ENCODE measurements at regions of chr10 and their contacts with region 1.

Region 1: GRCh38 chr10:70879207-70879606 is 9.2 kb downstream of the PCBD1 start:
- DNase-seq: no peak

Region 2: DNA sequence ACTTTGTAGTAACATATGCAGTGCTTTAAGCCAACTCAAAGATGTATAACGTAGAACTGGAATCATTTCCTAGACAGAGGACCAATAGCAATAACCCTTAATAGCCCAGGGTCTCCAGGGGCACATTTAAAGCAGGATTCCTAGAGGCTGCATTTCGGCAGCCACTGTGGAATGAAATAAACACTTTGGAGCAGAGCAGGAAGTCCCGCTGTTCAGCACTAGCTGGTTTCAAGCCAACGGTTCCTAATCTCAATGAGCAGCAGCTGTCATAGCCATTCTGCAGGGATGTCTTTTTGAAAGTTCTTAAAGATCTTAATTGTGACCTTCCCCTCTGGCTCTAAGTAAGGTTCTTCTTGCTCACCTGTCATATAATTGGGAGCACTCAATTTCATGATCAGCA is 845.0 kb before region 1 on chr10:
- in situ Hi-C with region 1: no loop called
- DNase-seq: no peak

Region 3: GRCh38 chr10:70672165-70673042 is 206.8 kb before region 1 on chr10 and contains the start of gene ADAMTS14:
- in situ Hi-C with region 1: no loop called
- DNase-seq: peak; percentile 33

Region 4: GRCh38 chr10:70815504-70816219 is 63.5 kb before region 1 on chr10 and contains the start of gene SGPL1:
- in situ Hi-C with region 1: loop called (anchors 10 kb)
- DNase-seq: peak; percentile 84